Activated naive CD4-positive, alpha-beta T cell treated with anti-CD3 and anti-CD28 coated beads for 36 hours (primary cell): ENCODE measurements at regions of chr1 and their contacts with region 1.

Region 1: DNA sequence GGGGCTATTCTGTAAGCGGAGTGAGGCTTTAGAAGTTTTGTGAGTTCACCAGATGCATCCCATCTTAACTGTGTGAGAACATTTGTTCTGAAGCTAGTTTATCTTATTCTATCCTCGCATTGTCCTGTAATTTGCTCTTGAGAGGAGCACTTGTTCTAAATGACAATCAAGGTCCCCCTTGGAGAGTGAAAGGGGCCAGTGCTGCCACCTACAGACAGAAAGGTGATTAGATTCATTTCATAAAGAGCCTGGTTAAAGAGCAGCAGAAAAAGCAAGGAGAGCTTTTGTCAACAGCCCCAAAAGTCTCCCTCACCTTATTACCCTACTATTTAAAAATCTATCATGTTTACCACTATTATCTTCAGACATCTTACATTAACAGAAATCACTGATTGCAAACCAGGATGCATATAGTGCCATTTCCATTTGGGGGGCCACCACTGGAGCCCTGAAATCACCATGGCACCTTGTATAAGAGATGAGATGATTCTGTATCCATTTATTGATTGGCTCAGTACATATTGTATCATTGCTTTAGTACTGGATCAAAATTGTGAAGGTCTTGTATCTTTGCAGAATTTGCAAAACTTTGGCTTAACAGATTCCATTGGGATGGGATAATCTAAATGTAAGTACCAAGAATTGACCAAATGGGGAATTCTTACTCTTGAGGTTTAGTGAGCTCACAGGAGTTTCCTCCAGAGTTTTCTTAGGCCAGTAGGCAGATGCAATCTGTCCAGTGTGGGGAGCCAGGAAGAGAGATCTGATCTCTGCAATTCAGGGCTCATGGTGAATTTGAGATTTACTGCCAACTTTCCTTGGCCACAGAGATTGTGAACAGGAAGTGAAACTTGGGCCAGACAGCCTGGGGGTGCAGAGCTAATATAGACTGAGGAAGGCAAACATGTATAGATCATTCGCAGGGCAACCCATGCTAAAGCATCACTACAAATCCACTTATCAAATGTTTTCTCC is 64.3 kb upstream of the TRABD2B start:
- DNase-seq: peak; percentile 59
- H3K4me3 Mint-ChIP-seq: no peak overlapping the region
- H3K27ac Mint-ChIP-seq: no peak overlapping the region
- H3K4me1 Mint-ChIP-seq: no peaks in the 10 kb centered on the region
- H3K27me3 Mint-ChIP-seq: peaks cover 1% of the 10 kb centered on the region

Region 2: GRCh38 chr1:47611992-47612391 is 449.5 kb before region 1 on chr1:
- CTCF ChIA-PET with region 1: no interaction called
- intact Hi-C with region 1: no loop called
- DNase-seq: no peak
- H3K4me3 Mint-ChIP-seq: no peak overlapping the region
- H3K27ac Mint-ChIP-seq: no peak overlapping the region
- H3K4me1 Mint-ChIP-seq: no peaks in the 10 kb centered on the region
- H3K27me3 Mint-ChIP-seq: peaks cover 11% of the 10 kb centered on the region

Region 3: DNA sequence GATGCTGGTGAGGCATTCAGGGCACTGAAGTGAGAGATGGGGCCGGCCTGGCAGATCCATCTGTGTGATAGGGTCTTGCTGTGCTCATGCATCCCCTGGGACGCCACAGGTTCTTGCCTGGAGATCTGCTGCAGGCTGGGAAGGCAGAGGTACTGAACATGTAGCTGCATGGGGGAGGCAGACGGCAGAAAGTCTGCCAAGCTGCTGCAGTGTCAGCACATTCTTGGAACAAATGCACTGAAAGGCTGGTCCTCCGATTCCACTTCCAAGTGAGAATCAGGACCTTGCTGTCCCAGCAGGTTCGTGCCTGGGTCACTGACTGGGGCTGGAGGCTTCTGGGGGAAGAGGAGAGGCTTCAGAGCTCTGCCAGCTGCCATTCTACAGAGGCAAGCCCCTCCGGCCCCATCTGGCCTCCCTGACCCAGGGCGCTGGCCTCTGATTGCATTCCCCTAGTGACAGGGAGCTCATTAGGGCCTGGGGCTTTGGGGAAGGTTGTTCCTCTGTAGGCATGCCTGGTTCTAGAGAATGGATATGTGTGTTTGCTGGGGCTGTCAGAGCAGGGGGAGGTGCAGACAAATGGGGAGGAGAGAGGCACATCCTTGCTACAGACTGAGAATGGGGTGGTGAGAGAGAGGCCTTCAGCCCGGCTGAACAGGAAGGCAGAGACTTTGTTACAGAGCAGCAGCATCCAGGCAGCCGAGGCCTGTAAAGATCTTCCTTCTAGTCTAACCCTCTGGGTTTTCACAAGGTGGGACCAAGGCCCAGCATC is 238.2 kb before region 1 on chr1:
- CTCF ChIA-PET with region 1: no interaction called
- intact Hi-C with region 1: no loop called
- DNase-seq: no peak
- H3K4me3 Mint-ChIP-seq: no peak overlapping the region
- H3K27ac Mint-ChIP-seq: no peak overlapping the region
- H3K4me1 Mint-ChIP-seq: no peaks in the 10 kb centered on the region
- H3K27me3 Mint-ChIP-seq: peaks cover 2% of the 10 kb centered on the region

Region 4: GRCh38 chr1:47997289-47998200 is 63.9 kb before region 1 on chr1 and contains the start of gene TRABD2B:
- CTCF ChIA-PET with region 1: interaction called, 18 read pairs
- intact Hi-C with region 1: loop called (anchors 1 kb)
- DNase-seq: peak; percentile 65
- H3K4me3 Mint-ChIP-seq: peak within 1 kb of the TSS; percentile 68
- H3K27ac Mint-ChIP-seq: no peak within 1 kb of the TSS
- H3K4me1 Mint-ChIP-seq: peaks cover 4% of the 10 kb centered on the region
- H3K27me3 Mint-ChIP-seq: peaks cover 50% of the 10 kb centered on the region
- total RNA-seq, gene TRABD2B: not detected